Right ventricle myocardium inferior (tissue), 1 donor: ENCODE measurements at regions of chr3 and their contacts with region 1.

Region 1: DNA sequence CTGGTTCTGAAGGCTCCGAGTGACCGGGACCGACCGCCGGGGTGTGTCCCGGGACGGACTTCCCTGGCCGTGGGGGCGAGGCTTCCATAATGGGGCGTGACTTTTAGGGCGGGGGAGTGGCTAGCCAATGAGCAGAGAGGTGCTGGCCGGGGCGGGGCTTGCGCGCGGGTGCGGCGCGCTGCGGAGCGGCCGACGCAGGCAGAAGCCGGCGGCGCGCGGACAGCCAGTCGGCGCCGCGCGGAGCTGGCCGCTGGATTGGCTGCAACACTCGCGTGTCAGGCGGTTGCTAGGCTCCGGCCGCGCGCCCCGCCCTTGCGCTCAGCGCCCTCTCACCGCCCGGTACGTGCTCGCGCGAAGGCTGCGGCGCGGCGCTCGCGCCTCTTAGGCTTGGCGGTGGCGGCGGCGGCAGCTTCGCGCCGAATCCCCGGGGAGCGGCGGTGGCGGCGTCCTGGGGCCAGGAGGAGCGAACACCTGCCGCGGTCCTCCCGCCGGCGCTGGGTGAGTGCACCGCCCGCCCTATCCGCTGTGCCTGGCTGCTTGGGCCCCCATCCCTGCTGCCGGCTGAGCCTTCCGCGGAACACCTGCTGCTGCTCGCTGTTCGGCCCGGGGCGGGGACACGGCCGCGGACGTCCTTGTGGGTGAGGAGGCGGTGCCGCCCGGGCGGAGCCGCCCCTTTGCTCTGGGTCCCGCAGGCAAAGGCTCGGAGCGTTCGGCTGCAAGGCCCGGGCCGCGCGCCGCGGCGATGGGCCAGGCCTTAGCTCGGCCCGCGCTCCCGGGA is at the start of gene DAG1:
- DNase-seq: peak; percentile 99
- ATAC-seq: peak; percentile 93
- total RNA-seq, gene DAG1: 129 TPM

Region 2: GRCh38 chr3:49519296-49519695 is 49.2 kb after region 1 on chr3:
- intact Hi-C with region 1: loop called (anchors 5 kb)
- DNase-seq: no peak
- ATAC-seq: no peak

Region 3: DNA sequence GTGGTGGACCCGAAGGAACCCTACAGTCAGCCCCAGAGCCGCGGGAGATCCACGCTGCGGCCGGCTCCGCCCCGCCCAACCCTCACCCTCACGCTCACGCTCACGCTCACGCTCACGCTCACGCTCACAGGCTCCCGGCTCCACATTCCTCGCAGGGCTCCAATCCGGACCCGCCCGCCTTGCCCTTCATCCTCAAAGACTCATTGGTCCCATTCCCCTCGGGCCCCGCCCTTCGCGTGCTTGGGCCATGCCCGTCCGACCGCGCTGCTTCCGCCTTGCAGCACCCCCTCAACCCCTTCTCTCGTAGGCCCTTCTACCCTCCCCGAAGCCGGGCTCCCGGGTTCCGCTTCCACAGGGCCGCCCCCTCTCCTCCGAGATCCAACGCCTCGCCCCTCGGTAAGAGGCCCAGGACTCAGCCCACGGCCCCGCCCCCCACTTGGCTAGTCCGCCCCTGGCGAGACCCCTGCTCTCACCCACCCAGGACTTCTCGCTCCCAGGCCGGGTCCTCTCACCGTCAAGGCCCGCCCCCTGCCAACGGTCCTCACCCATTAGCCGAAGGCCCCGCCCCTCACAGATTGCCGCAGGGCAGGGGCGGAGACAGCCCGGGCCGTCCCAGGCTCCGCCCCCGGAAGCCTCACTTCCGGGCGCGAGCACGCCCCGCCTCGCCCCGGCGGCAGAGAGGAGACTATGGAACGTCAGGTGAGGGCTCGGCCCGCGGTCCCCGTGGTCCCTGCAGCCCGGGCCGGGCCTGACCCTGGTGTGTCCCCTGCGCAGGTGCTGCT is 203.8 kb after region 1 on chr3 and contains the start of gene APEH:
- intact Hi-C with region 1: loop called (anchors 5 kb)
- DNase-seq: peak; percentile 99
- ATAC-seq: peak; percentile 96
- total RNA-seq, gene APEH: 99.5 TPM